Gastrocnemius medialis (tissue), 4 donors: ENCODE measurements at regions of chr18 and their contacts with region 1.

Region 1: GRCh38 chr18:50002781-50003180 is 189.4 kb upstream of the ACAA2 start:
- DNase-seq: no peak
- ATAC-seq: no peak
- H3K4me3 ChIP-seq: no peak overlapping the region
- H3K27ac ChIP-seq: no peak overlapping the region
- H3K4me1 ChIP-seq: no peaks in the 10 kb centered on the region
- H3K27me3 ChIP-seq: no peaks in the 10 kb centered on the region
- CTCF ChIP-seq: no peak
- POLR2A ChIP-seq: no peak

Region 2: DNA sequence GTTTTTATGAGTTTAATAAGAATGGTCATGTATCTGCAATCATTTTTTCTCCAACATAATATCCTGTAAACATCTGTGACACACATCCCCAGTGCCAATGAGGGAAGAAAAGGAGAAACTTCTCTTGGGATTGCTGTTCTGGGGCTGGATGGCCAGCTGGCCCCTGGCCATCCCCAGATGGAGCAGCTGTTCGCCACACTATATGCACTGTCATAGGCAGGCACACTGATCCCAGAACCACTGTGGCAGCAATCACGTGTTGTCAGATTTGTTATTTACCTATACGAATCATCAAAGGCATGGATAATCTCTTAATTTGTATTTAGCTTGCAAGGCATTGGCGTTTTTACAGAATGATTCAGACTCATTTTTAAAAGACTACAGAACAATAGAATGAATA is 21.9 kb before region 1 on chr18:
- in situ Hi-C with region 1: no loop called
- intact Hi-C with region 1: loop called (anchors 2 kb)
- DNase-seq: no peak
- ATAC-seq: peak in 1 of 2 donors; percentile 37
- H3K4me3 ChIP-seq: no peak overlapping the region
- H3K27ac ChIP-seq: no peak overlapping the region
- H3K4me1 ChIP-seq: peaks cover 0 to 4% of the 10 kb centered on the region in 2 donors
- H3K27me3 ChIP-seq: no peaks in the 10 kb centered on the region
- CTCF ChIP-seq: no peak
- POLR2A ChIP-seq: no peak

Region 3: DNA sequence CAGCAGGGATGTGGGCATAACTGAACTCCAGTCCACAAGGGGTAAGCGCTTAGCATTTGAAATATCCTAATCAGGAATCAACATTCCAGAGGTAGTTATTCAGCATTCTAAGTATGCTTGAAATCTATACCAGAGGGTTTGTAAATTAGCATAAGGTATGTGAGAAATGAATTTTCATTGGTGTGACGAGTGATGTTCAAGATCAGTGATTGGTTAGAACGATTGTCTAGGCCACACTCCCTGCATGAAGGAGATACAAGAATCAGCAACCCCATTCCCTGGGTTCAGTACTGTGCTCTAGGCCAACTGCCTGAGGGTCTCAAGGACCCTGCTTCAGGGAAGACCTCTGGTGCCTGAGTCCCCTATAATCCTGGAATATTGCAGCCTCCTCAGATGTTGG is 599.7 kb after region 1 on chr18:
- in situ Hi-C with region 1: no loop called
- intact Hi-C with region 1: no loop called
- DNase-seq: no peak
- ATAC-seq: no peak
- H3K4me3 ChIP-seq: no peak overlapping the region
- H3K27ac ChIP-seq: no peak overlapping the region
- H3K4me1 ChIP-seq: no peaks in the 10 kb centered on the region
- H3K27me3 ChIP-seq: no peaks in the 10 kb centered on the region
- CTCF ChIP-seq: no peak
- POLR2A ChIP-seq: no peak